Natural killer cell (primary cell): ENCODE measurements at regions of chr4 and their contacts with region 1.

Region 1: GRCh38 chr4:114015444-114015899 is 36.0 kb upstream of the ARSJ start:
- DNase-seq: no peak
- ATAC-seq: no peak
- H3K4me3 ChIP-seq: no peak overlapping the region
- H3K4me3 Mint-ChIP-seq: no peak overlapping the region
- H3K27ac ChIP-seq: no peak overlapping the region
- H3K27ac Mint-ChIP-seq: no peak overlapping the region
- H3K4me1 ChIP-seq: no peaks in the 10 kb centered on the region
- H3K4me1 Mint-ChIP-seq: no peaks in the 10 kb centered on the region
- H3K27me3 ChIP-seq: no peaks in the 10 kb centered on the region
- H3K27me3 Mint-ChIP-seq: no peaks in the 10 kb centered on the region
- CTCF ChIP-seq: no peak

Region 2: DNA sequence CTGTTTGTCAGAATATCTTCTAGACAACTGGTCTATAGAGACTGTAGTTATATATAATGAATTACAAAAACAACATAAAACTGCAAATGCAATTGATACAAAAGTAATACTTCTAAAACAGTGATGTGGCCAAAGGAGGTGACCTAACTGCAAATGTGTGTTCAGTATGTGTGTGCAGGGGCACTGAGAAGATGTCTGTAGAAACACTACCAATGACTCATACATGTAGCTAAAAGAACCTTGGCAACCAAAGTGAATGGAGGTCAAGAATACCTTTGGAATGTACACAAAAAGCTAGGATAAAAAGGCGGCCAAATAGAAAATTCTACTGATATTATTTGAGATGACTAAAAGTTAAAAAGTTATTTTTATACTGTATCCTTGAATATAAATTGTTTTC is 515.8 kb before region 1 on chr4:
- intact Hi-C with region 1: no loop called
- DNase-seq: no peak
- ATAC-seq: no peak
- H3K4me3 ChIP-seq: no peak overlapping the region
- H3K4me3 Mint-ChIP-seq: no peak overlapping the region
- H3K27ac ChIP-seq: no peak overlapping the region
- H3K27ac Mint-ChIP-seq: no peak overlapping the region
- H3K4me1 ChIP-seq: no peaks in the 10 kb centered on the region
- H3K4me1 Mint-ChIP-seq: no peaks in the 10 kb centered on the region
- H3K27me3 ChIP-seq: no peaks in the 10 kb centered on the region
- H3K27me3 Mint-ChIP-seq: no peaks in the 10 kb centered on the region
- CTCF ChIP-seq: no peak

Region 3: DNA sequence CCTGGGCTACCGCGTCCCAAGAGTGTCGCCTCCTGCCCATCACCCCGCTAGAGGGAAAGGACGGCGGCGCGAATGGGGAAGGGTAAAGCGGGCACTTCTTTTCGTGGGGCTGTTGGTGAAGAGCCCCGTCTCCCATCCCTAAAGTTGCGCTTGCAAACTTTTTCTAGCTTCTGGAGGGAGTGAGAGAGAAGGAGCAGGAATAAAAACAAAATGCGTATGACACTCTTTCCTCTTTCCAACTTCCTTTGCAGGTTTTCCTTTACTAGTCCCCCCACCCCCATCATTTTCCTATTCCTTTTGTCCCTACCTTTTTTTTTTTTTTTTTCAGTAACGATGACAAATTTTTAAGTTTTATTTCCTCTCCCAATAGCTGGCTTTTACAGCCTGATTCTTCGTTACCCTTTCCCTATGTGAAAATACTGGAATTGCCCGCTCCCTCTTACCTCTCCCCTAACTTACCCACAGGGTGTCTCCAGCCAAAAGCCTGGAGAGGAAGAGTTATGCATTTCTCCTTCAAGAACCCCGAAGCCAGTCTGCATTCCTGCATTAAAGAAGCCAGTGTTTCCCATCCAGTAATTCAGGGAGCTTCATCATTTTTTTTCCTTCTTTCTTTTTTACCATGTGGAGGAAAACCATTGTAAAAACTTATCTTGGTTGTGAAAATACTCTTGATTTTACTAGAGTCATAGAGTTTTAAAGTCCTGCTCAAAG is 35.4 kb before region 1 on chr4:
- intact Hi-C with region 1: loop called (anchors 5 kb)
- DNase-seq: no peak
- ATAC-seq: peak in 1 of 3 donors; percentile 52
- H3K4me3 ChIP-seq: peak overlapping the region; percentile 42
- H3K4me3 Mint-ChIP-seq: peak overlapping the region; percentile 94
- H3K27ac ChIP-seq: no peak overlapping the region
- H3K27ac Mint-ChIP-seq: peak overlapping the region; percentile 69 to 77
- H3K4me1 ChIP-seq: peaks cover 14% of the 10 kb centered on the region
- H3K4me1 Mint-ChIP-seq: peaks cover 21 to 33% of the 10 kb centered on the region in 2 donors
- H3K27me3 ChIP-seq: peaks cover 3% of the 10 kb centered on the region
- H3K27me3 Mint-ChIP-seq: peaks cover 32 to 38% of the 10 kb centered on the region in 2 donors
- CTCF ChIP-seq: no peak